ENCODE measurements at regions of chr9 and their contacts with region 1.

Region 1: GRCh38 chr9:19116107-19116790 is 11.0 kb downstream of the PLIN2 start:
- DNase-seq: no peak
- H3K4me3 ChIP-seq: no peak overlapping the region
- CTCF ChIP-seq: no peak

Region 2: DNA sequence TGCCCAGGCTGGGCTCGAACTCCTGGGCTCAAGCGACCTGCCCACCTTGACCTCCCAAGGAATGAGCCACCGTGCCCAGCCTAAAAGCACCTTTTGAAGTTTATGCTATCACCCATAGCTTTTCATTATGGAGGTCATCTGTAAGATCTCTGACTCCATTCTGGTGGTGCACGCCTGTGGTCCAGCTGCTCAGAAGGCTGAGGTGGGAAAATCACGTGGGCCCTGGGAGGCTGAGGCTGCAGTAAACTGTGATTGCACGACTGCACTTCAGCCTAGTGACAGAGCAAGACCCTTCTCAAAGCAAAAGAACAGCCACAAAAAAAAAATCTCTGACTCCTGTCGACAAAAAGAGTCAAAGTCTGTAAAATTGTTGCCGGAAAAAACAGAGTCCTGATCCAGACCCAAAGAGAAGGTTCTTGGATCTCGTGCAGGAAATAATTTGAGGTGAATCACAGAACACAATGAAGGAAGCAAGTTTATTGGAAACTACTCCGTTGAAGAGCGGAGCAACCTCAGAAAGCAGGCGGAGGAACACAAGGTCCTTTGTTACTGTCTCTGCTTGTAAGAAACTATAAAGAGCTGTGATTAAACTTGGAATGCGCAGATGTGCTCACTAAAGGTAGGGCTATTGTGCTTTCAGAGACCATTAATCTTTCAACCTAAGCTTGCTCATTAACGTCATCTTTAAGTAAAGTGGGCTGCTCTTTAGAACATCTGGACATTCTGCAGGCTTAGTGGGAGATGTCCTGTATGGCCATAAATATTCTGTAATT is 11.6 kb before region 1 on chr9:
- CTCF ChIA-PET with region 1: interaction called, 11 read pairs
- POLR2A ChIA-PET with region 1: interaction called, 3 read pairs
- DNase-seq: no peak
- H3K4me3 ChIP-seq: no peak overlapping the region
- CTCF ChIP-seq: no peak

Region 3: GRCh38 chr9:19201899-19202891 is 85.9 kb after region 1 on chr9:
- CTCF ChIA-PET with region 1: no interaction called
- POLR2A ChIA-PET with region 1: no interaction called
- DNase-seq: no peak
- H3K4me3 ChIP-seq: no peak overlapping the region
- CTCF ChIP-seq: no peak

Region 4: GRCh38 chr9:19216466-19216865 is 100.2 kb after region 1 on chr9:
- CTCF ChIA-PET with region 1: no interaction called
- POLR2A ChIA-PET with region 1: no interaction called
- DNase-seq: no peak
- H3K4me3 ChIP-seq: no peak overlapping the region
- CTCF ChIP-seq: no peak